ENCODE measurements at regions of chr2 and their contacts with region 1.

Region 1: DNA sequence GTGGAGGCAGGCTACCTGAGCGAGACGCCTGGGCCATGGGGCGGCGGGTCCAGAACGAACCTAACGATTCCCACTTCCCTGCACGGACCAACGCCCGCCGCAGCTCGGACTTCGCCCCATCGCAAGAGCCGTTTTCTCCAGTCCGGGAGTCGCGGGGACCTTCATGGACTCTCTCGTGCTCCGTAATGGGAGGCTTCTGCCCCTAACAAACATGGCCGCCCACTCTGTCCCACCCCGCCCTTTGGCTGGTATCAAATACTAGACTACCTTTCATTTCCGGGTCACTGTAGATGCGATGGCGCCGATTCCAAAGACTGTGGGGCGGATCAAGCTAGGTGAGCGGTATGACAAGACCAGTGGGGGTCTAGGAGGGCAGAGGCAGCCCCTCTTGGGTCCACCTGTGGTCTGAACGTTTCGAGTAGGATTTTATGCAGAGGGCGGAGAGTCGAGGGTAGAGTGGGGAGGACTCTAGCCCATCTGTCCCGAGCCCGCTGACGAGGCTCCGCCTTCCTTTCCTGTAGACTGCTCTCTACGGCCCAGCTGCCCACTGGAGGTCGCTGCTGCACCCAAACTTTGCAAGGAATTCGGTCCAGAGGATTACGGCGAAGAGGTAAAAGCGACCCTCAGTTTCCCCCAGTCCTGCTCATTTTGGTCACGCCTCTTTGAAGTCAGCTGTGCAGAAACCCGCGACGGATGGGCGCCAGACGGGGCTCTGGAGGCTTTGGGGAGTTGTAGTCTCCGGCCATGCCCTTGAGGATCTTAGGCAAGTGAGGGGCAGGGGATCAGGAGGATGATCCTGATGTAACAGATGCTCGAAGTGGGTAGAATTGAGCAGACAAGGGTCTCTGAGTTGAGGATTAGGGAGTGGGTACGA is at the starts of genes CCDC142 and TTC31:
- DNase-seq: peak; percentile 96 to 99 (median 96)
- ATAC-seq: peak; percentile 97
- H3K4me3 ChIP-seq: peak within 1 kb of the TSS; percentile 84 to 96
- H3K27ac ChIP-seq: peak within 1 kb of the TSS; percentile 89 to 94
- H3K4me1 ChIP-seq: peaks cover 19 to 44% of the 10 kb centered on the region in 2 donors
- H3K27me3 ChIP-seq: no peaks in the 10 kb centered on the region
- CTCF ChIP-seq: peak; percentile 65 to 89
- polyA plus RNA-seq, gene CCDC142: 13.7 to 18.6 (median 17.4) TPM
- polyA plus RNA-seq, gene TTC31: 31.2 to 38.4 (median 34.2) TPM

Region 2: GRCh38 chr2:74364533-74365505 is 118.2 kb before region 1 on chr2:
- intact Hi-C with region 1: no loop called
- DNase-seq: no peak
- ATAC-seq: no peak
- H3K4me3 ChIP-seq: no peak overlapping the region
- H3K27ac ChIP-seq: no peak overlapping the region
- H3K4me1 ChIP-seq: no peaks in the 10 kb centered on the region
- H3K27me3 ChIP-seq: no peaks in the 10 kb centered on the region
- CTCF ChIP-seq: no peak

Region 3: GRCh38 chr2:74587664-74588277 is 104.7 kb after region 1 on chr2:
- intact Hi-C with region 1: loop called in 1 of 2 experiments (anchors 5 kb)
- DNase-seq: peak in 3 of 4 donors; percentile 55 to 78 (median 64)
- ATAC-seq: peak; percentile 97
- H3K4me3 ChIP-seq: no peak overlapping the region
- H3K27ac ChIP-seq: no peak overlapping the region
- H3K4me1 ChIP-seq: peaks cover 0 to 26% of the 10 kb centered on the region in 2 donors
- H3K27me3 ChIP-seq: peaks cover 3 to 7% of the 10 kb centered on the region in 2 donors
- CTCF ChIP-seq: peak; percentile 51 to 75

Region 4: DNA sequence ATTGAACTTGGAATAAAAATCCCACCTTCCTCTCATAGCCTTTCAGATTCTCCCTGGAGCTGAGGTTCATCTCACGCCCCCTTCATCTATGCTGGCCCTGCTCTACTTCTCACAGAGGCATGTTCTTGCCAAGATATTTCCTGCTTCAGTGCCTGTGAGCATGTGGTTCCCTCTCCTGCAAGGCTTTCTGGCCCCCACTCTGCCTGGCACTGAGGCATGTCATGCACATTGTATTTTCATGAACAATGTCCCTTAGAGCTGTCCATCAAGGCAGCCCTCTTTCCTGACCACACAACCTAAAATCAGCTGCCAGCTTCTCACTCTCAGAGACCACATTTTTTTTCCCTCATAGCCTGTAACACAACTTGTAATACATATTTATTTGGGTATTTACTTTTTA is 332.9 kb after region 1 on chr2:
- intact Hi-C with region 1: no loop called
- DNase-seq: no peak
- ATAC-seq: no peak
- H3K4me3 ChIP-seq: no peak overlapping the region
- H3K27ac ChIP-seq: peak overlapping the region in 1 of 2 donors; percentile 88
- H3K4me1 ChIP-seq: peaks cover 0 to 19% of the 10 kb centered on the region in 2 donors
- H3K27me3 ChIP-seq: no peaks in the 10 kb centered on the region
- CTCF ChIP-seq: no peak